ENCODE measurements at regions of chr17 and their contacts with region 1.

Region 1: GRCh38 chr17:6666077-6666521 is 14.5 kb downstream of the C17orf100 start:
- DNase-seq: peak; percentile 79
- ATAC-seq: peak; percentile 100
- H3K4me3 ChIP-seq: no peak overlapping the region
- H3K27ac ChIP-seq: no peak overlapping the region
- H3K4me1 ChIP-seq: no peaks in the 10 kb centered on the region
- H3K27me3 ChIP-seq: peaks cover 29% of the 10 kb centered on the region
- CTCF ChIP-seq: peak; percentile 97
- POLR2A ChIP-seq: no peak; the same call in 1 of the 2 replicates
- RAD21 ChIP-seq: peak; percentile 98

Region 2: DNA sequence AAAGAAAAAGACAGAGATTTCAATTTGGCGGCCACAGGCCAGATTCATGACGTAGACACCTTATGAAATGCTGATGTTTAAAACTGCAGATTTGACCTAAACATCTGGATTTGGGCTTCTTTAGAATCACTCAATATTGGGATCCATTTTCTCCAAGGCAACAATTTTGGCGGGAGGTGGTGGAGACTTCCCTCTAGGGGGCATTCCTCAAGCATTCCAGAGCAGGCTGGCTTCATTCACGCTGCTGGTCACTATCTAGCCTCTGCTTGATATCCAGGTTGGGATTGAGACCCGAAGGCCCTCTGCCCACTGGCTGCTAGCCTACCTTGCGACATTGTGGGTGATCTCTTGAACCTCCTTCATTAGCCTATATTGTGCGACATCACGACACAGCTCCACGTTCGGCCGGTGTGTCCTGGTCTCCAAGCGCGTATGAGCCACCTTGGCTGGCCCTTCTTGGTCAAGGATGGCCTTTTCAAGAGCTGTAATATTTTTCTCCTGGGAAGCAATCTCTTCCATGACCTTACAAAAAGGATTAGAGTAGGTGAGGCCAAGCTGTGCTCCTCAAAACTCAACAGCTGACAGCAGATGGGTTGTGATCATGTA is 134.4 kb after region 1 on chr17:
- CTCF ChIA-PET with region 1: interaction called, 4 read pairs
- POLR2A ChIA-PET with region 1: no interaction called
- dilution Hi-C with region 1: no loop called
- in situ Hi-C with region 1: loop called (anchors 10 kb)
- intact Hi-C with region 1: loop called (anchors 1 kb)
- DNase-seq: peak; percentile 4
- ATAC-seq: 0 out of 2 replicates have a peak, but pooled peaks have one; percentile 29
- H3K4me3 ChIP-seq: no peak overlapping the region
- H3K27ac ChIP-seq: no peak overlapping the region
- H3K4me1 ChIP-seq: no peaks in the 10 kb centered on the region
- H3K27me3 ChIP-seq: peaks cover 8% of the 10 kb centered on the region
- CTCF ChIP-seq: peak; percentile 56
- POLR2A ChIP-seq: no peak
- RAD21 ChIP-seq: peak; percentile 67

Region 3: GRCh38 chr17:6843241-6843880 is 177.3 kb after region 1 on chr17:
- CTCF ChIA-PET with region 1: interaction called, 9 read pairs
- POLR2A ChIA-PET with region 1: no interaction called
- dilution Hi-C with region 1: no loop called
- in situ Hi-C with region 1: loop called (anchors 10 kb)
- intact Hi-C with region 1: loop called (anchors 1 kb)
- DNase-seq: peak; percentile 52
- ATAC-seq: peak; percentile 67
- H3K4me3 ChIP-seq: no peak overlapping the region
- H3K27ac ChIP-seq: no peak overlapping the region
- H3K4me1 ChIP-seq: no peaks in the 10 kb centered on the region
- H3K27me3 ChIP-seq: peaks cover 9% of the 10 kb centered on the region
- CTCF ChIP-seq: peak; percentile 50
- POLR2A ChIP-seq: no peak
- RAD21 ChIP-seq: peak; percentile 43

Region 4: DNA sequence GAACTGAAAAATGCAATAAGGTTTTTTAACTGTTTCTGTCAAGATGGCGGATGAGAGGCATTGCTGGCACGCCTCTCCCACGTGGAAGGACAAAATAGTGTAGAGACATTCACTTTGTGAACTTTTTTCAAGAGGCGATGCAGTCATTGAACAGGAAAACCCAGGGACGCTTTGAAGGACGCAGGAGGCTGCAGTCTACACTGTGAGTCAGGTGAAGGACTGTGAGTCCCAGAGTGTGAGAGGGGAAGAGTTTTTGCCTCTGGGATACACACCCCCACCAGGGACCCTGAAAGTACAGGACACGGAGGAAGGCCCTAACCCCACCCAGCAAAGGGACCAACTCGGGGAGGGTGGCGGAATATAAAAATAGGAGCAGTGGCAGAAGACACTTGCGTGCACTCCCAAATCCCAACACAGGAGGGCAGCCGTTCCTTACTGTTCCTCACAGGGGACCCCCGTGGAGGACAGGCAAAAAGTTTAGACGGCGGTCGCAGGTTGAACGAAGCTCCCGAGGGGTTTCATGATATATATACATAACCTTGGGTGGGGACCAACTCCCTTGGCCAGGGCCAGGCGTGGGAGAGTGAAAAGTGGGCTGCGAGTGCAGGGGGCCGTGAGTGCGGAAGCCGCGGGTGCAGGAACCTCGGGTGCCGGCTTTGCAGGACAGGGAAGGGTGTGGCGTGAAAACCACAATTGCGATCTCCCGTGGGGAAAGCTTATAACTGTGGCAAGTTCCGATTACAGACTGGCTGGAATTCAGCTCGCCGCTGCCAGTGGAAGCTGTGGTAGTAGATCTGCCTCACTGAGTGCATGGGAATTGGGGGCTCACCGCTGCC is 247.7 kb after region 1 on chr17:
- CTCF ChIA-PET with region 1: interaction called, 3 read pairs
- POLR2A ChIA-PET with region 1: no interaction called
- dilution Hi-C with region 1: no loop called
- in situ Hi-C with region 1: no loop called
- intact Hi-C with region 1: loop called (anchors 1 kb)
- DNase-seq: peak; percentile 42
- ATAC-seq: peak; percentile 97
- H3K4me3 ChIP-seq: no peak overlapping the region
- H3K27ac ChIP-seq: no peak overlapping the region
- H3K4me1 ChIP-seq: no peaks in the 10 kb centered on the region
- H3K27me3 ChIP-seq: peaks cover 22% of the 10 kb centered on the region
- CTCF ChIP-seq: peak; percentile 83
- POLR2A ChIP-seq: no peak
- RAD21 ChIP-seq: peak; percentile 84

Region 5: DNA sequence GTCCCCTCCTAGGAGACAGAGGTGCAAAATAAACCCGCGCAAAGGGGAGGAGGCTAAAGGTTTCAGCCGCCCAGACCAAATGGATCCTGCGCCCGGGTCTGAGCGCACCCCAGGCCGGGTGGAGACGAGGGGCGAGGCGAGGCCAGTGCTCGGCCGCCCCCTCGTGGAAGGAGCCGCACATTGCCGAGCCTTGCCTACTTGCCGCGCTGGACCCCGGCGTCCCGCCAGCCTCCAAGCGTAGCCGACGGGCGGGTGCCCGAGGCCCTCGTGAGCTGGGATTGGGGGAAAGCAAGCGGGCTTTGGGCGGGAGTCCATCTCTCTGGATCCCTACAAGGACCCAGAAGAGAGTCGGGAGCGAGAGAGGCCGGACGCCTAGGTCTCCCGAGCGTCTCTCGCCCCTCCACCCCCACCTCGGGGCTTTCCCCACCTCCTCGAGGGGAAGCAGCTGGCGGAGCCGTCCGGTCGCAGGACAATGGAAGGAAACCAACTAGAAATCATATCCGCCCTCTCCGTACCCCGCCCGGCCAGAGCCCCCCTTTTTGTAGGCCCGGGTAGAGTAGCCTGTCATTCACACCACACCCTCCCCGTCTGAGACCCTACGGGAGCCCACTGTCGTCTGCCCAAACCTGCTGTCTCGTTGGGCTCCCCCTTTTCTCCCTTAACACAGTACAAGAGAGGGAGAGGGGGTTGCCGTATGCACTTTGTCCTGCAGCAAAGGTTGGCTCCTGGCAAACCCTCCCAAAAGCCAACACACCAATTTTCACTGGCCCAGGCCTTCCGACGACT is 356.1 kb after region 1 on chr17:
- CTCF ChIA-PET with region 1: no interaction called
- POLR2A ChIA-PET with region 1: no interaction called
- dilution Hi-C with region 1: no loop called
- in situ Hi-C with region 1: loop called (anchors 10 kb)
- intact Hi-C with region 1: loop called (anchors 1 kb)
- DNase-seq: peak; percentile 36
- ATAC-seq: peak; percentile 89
- H3K4me3 ChIP-seq: no peak overlapping the region
- H3K27ac ChIP-seq: no peak overlapping the region
- H3K4me1 ChIP-seq: peaks cover 4% of the 10 kb centered on the region; the same call in 1 of the 2 replicates
- H3K27me3 ChIP-seq: peaks cover 10% of the 10 kb centered on the region; the same call in 1 of the 2 replicates
- CTCF ChIP-seq: peak; percentile 87
- POLR2A ChIP-seq: 0 out of 2 replicates have a peak, but pooled peaks have one; percentile 39
- RAD21 ChIP-seq: peak; percentile 80

Region 6: GRCh38 chr17:8016632-8017478 is 1350.8 kb after region 1 on chr17:
- CTCF ChIA-PET with region 1: no interaction called
- POLR2A ChIA-PET with region 1: no interaction called
- dilution Hi-C with region 1: no loop called
- in situ Hi-C with region 1: no loop called
- intact Hi-C with region 1: no loop called
- DNase-seq: no peak
- ATAC-seq: peak; percentile 66
- H3K4me3 ChIP-seq: no peak overlapping the region
- H3K27ac ChIP-seq: no peak overlapping the region
- H3K4me1 ChIP-seq: peaks cover 3% of the 10 kb centered on the region; the same call in 1 of the 2 replicates
- H3K27me3 ChIP-seq: peaks cover 78% of the 10 kb centered on the region
- CTCF ChIP-seq: peak; percentile 48
- POLR2A ChIP-seq: no peak
- RAD21 ChIP-seq: peak; percentile 30; the same call in 1 of the 2 replicates

Measured in IMR-90 (cell line).